ENCODE measurements at regions of chr4 and their contacts with region 1.

Region 1: GRCh38 chr4:73676861-73677323 is 56.7 kb upstream of the RASSF6 start:
- DNase-seq: peak; percentile 100
- ATAC-seq: peak; percentile 81
- H3K4me3 ChIP-seq: no peak overlapping the region
- H3K27ac ChIP-seq: peak overlapping the region; percentile 96
- H3K4me1 ChIP-seq: peaks cover 82% of the 10 kb centered on the region
- H3K27me3 ChIP-seq: no peaks in the 10 kb centered on the region
- CTCF ChIP-seq: no peak

Region 2: DNA sequence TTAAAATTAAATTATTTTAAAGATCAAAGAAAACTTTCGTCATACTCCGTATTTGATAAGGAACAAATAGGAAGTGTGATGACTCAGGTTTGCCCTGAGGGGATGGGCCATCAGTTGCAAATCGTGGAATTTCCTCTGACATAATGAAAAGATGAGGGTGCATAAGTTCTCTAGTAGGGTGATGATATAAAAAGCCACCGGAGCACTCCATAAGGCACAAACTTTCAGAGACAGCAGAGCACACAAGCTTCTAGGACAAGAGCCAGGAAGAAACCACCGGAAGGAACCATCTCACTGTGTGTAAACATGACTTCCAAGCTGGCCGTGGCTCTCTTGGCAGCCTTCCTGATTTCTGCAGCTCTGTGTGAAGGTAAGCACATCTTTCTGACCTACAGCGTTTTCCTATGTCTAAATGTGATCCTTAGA is 63.5 kb after region 1 on chr4 and contains the start of gene CXCL8:
- CTCF ChIA-PET with region 1: no interaction called
- POLR2A ChIA-PET with region 1: interaction called, 6 read pairs
- intact Hi-C with region 1: loop called (anchors 1 kb)
- DNase-seq: peak; percentile 100
- ATAC-seq: peak; percentile 98
- H3K4me3 ChIP-seq: peak within 1 kb of the TSS; percentile 65
- H3K27ac ChIP-seq: peak within 1 kb of the TSS; percentile 93
- H3K4me1 ChIP-seq: peaks cover 38% of the 10 kb centered on the region
- H3K27me3 ChIP-seq: no peaks in the 10 kb centered on the region
- CTCF ChIP-seq: no peak
- total RNA-seq, gene CXCL8: 360 and 477 TPM in 2 replicates

Region 3: DNA sequence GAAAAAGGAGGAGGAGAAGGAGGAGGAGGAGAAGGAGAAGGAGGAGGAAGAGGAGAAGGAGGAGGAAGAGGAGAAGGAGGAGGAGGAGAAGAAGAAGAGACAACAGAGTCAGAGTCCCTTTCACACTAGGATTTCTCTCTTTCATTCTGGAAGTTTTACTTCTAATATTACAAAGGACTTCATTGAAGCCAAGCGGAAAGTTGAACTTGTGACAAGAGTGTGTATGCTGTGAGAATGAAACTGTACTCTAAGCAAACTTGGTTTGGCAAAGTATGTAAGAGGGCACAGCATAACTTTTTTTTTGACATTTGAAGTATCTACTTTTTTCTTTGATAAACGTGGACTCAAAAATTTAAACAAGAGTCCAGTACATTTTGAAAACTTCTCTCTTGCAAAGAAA is 111.5 kb after region 1 on chr4:
- CTCF ChIA-PET with region 1: no interaction called
- POLR2A ChIA-PET with region 1: no interaction called
- intact Hi-C with region 1: no loop called
- DNase-seq: no peak
- ATAC-seq: no peak
- H3K4me3 ChIP-seq: no peak overlapping the region
- H3K27ac ChIP-seq: no peak overlapping the region
- H3K4me1 ChIP-seq: peaks cover 6% of the 10 kb centered on the region; the same call in 1 of the 2 replicates
- H3K27me3 ChIP-seq: no peaks in the 10 kb centered on the region
- CTCF ChIP-seq: no peak

Region 4: DNA sequence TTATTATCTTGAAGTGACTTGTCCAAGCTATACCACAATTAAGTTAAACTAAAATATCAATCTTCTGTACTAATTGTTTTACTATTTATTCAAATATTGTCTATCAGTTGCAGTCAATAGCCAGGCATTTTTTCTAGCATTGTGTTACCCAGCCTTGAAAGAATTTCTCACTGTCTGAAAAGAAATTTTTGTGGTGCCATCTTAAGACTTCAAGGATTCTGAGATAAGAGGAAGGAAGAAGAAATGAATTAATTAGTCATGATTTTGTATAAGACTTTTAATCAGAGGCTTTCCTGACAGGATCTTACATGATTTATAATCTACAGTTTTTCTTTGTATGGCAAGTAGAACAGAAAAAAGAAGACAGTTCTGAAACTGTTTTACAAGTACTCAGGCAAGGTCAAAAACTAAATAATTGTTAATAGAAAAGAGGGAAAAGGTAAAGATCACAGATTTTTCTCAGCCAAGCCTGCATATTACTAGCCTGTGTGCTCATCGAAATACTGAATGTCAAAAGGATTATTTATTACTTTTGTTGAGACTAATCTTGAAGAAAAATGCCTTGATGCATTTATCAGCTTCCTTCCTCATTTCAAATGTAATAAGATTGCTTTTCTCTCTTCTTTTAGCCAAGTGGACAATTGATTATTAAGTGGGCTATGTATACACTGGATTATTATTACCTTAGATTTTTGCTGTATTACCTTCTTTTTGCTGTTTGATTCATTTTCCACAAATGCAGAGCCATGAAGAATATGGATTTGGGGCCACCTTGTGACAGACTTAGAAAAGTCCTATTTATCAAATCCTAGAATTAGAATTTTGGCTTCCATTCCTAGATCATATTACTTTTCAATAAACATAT is 246.1 kb after region 1 on chr4:
- CTCF ChIA-PET with region 1: interaction called, 4 read pairs
- POLR2A ChIA-PET with region 1: no interaction called
- intact Hi-C with region 1: loop called (anchors 5 kb)
- DNase-seq: peak; percentile 83
- ATAC-seq: peak; percentile 70
- H3K4me3 ChIP-seq: no peak overlapping the region
- H3K27ac ChIP-seq: peak overlapping the region; percentile 59
- H3K4me1 ChIP-seq: peaks cover 26% of the 10 kb centered on the region
- H3K27me3 ChIP-seq: no peaks in the 10 kb centered on the region
- CTCF ChIP-seq: peak; percentile 91

Region 5: DNA sequence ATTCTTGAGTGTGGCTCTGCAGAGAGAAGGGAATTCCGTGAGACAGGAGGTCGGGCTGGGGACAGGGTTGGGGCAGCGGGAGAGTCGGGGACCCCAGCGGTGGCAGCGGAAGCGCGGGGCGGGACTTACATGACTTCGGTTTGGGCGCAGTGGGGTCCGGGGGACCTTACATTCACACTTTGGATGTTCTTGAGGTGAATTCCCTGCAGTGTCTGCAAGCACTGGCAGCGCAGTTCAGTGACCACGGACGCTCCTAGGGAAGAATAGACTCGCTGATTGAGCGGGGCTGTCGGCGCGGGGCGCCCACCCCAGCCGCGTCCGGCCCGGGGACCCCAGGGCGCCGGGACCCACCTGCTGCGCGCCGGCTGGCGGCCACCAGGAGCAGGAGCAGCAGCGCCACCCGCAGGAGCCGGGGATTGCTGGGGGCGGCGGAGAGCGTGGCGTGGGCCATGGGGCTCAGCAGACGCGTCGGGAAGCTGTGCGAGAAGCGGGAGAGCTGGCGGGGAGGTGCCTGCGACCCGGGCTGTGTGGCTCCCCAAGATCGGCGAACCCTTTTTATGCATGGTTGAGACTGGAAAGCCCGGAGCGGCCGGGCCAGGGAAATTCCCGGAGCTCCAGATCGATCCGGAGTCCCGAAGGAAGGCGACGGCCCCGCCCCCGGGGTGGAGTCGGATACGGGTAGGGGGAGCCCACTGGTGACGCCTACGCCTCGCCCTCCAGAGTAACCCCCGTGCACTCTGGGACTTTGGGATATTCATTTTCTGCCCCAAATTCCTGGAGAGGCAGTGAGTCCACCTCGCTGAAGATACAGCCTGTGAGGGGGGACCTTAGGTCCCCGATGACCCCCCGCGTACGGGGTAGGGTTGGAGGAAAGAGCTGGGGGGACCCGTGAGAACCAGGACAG is 361.5 kb after region 1 on chr4 and contains the start of gene CXCL3:
- CTCF ChIA-PET with region 1: no interaction called
- POLR2A ChIA-PET with region 1: interaction called, 3 read pairs
- intact Hi-C with region 1: loop called (anchors 5 kb)
- DNase-seq: peak; percentile 78
- ATAC-seq: peak; percentile 86
- H3K4me3 ChIP-seq: peak within 1 kb of the TSS; percentile 78
- H3K27ac ChIP-seq: peak within 1 kb of the TSS; percentile 51
- H3K4me1 ChIP-seq: peaks cover 48% of the 10 kb centered on the region
- H3K27me3 ChIP-seq: no peaks in the 10 kb centered on the region
- CTCF ChIP-seq: peak; percentile 75
- total RNA-seq, gene CXCL3: 25.1 and 28.9 TPM in 2 replicates

Measured in PC-3 (cell line).